ENCODE measurements at regions of chr3 and their contacts with region 1.

Region 1: GRCh38 chr3:3209714-3210113 is 30.2 kb upstream of the CRBN start:
- DNase-seq: no peak
- ATAC-seq: no peak
- H3K4me3 ChIP-seq: no peak overlapping the region
- H3K27ac ChIP-seq: no peak overlapping the region
- H3K4me1 ChIP-seq: no peaks in the 10 kb centered on the region
- H3K27me3 ChIP-seq: no peaks in the 10 kb centered on the region
- CTCF ChIP-seq: no peak
- POLR2A ChIP-seq: no peak

Region 2: GRCh38 chr3:3145831-3146230 is 63.9 kb before region 1 on chr3:
- in situ Hi-C with region 1: no loop called
- intact Hi-C with region 1: no loop called
- DNase-seq: no peak
- ATAC-seq: no peak
- H3K4me3 ChIP-seq: no peak overlapping the region
- H3K27ac ChIP-seq: no peak overlapping the region
- H3K4me1 ChIP-seq: no peaks in the 10 kb centered on the region
- H3K27me3 ChIP-seq: no peaks in the 10 kb centered on the region
- CTCF ChIP-seq: no peak
- POLR2A ChIP-seq: no peak

Region 3: DNA sequence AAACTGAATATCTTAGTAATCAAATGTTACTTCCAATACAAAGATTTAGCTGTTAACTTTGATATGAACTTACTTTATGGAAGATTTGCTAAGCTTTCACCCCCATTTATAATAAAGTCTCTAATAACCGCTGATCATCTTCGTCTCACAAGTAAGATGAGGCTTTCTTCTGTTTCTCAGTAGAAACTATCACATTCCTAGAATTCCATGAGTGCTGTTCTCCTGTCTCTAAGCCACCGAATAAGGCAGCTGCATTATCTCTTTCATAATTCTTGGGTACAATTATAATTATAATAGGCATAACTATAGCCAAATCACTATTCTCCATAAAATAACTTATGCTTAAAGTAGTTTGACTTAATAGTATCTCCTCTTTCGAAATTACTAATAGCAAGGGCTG is 1075.2 kb after region 1 on chr3:
- in situ Hi-C with region 1: loop called in 3 of 4 experiments (anchors 10 kb)
- intact Hi-C with region 1: no loop called
- DNase-seq: no peak
- ATAC-seq: no peak
- H3K4me3 ChIP-seq: no peak overlapping the region
- H3K27ac ChIP-seq: no peak overlapping the region
- H3K4me1 ChIP-seq: no peaks in the 10 kb centered on the region
- H3K27me3 ChIP-seq: no peaks in the 10 kb centered on the region
- CTCF ChIP-seq: no peak
- POLR2A ChIP-seq: no peak

Measured in gastrocnemius medialis (tissue), 4 donors.